Heart left ventricle (tissue), 16 donors: ENCODE measurements at regions of chr7 and their contacts with region 1.

Region 1: GRCh38 chr7:30062591-30062990 is 34.4 kb downstream of the PLEKHA8 start:
- DNase-seq: no peak
- ATAC-seq: peak in 2 of 4 donors; percentile 65
- H3K4me3 ChIP-seq: no peak overlapping the region
- H3K27ac ChIP-seq: no peak overlapping the region
- H3K4me1 ChIP-seq: peaks cover 0 to 11% (median 0%) of the 10 kb centered on the region in 12 donors
- H3K27me3 ChIP-seq: no peaks in the 10 kb centered on the region
- CTCF ChIP-seq: peak; percentile 37 to 72 (median 54)
- POLR2A ChIP-seq: no peak

Region 2: GRCh38 chr7:29639881-29640595 is 422.6 kb before region 1 on chr7:
- intact Hi-C with region 1: loop called in 3 of 10 experiments (anchors 10 kb)
- DNase-seq: no peak
- ATAC-seq: no peak
- H3K4me3 ChIP-seq: no peak overlapping the region
- H3K27ac ChIP-seq: no peak overlapping the region
- H3K4me1 ChIP-seq: no peaks in the 10 kb centered on the region
- H3K27me3 ChIP-seq: no peaks in the 10 kb centered on the region
- CTCF ChIP-seq: no peak
- POLR2A ChIP-seq: no peak

Region 3: DNA sequence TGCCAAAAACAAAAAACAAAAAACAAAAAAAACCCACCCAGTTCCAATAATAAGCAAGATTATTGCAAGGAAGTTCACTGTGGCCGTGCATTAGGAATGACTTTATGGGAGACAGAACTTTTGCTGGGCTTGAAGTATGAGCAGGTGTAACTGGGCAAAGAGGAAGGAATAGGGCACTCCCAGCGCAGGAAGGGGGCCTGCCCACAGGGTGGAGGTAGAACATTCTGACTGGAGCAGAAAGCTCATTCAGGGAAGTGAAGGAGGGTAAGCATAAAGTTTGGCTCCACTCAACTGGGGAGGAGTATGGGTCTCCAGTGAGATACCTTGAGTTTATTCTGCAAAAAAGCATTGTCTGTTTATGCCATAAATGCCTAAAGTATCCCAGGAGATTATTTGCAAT is 298.4 kb before region 1 on chr7:
- intact Hi-C with region 1: loop called in 1 of 10 experiments (anchors 5 kb)
- DNase-seq: no peak
- ATAC-seq: no peak
- H3K4me3 ChIP-seq: no peak overlapping the region
- H3K27ac ChIP-seq: no peak overlapping the region
- H3K4me1 ChIP-seq: peaks cover 0 to 17% (median 0%) of the 10 kb centered on the region in 12 donors
- H3K27me3 ChIP-seq: no peaks in the 10 kb centered on the region
- CTCF ChIP-seq: peak in 6 of 12 donors; percentile 9 to 37 (median 22)
- POLR2A ChIP-seq: no peak

Region 4: GRCh38 chr7:29946428-29947186 is 116.0 kb before region 1 on chr7:
- intact Hi-C with region 1: loop called (anchors 2 to 10 kb)
- DNase-seq: peak in 4 of 5 donors; percentile 37 to 52 (median 40)
- ATAC-seq: peak; percentile 40 to 82 (median 56)
- H3K4me3 ChIP-seq: no peak overlapping the region
- H3K27ac ChIP-seq: peak overlapping the region in 1 of 12 donors; percentile 9
- H3K4me1 ChIP-seq: peaks cover 0 to 11% (median 0%) of the 10 kb centered on the region in 12 donors
- H3K27me3 ChIP-seq: no peaks in the 10 kb centered on the region
- CTCF ChIP-seq: peak in 11 of 12 donors; percentile 12 to 54 (median 33)
- POLR2A ChIP-seq: no peak